Ascending aorta (tissue), 2 donors: ENCODE measurements at regions of chr15 and their contacts with region 1.

Region 1: GRCh38 chr15:88620995-88621772 is at the start of gene AEN:
- DNase-seq: peak; percentile 86 to 97
- H3K4me3 ChIP-seq: peak within 1 kb of the TSS; percentile 73 to 97
- H3K27ac ChIP-seq: peak within 1 kb of the TSS; percentile 91 to 93
- H3K4me1 ChIP-seq: peaks cover 5 to 26% of the 10 kb centered on the region in 2 donors
- H3K27me3 ChIP-seq: no peaks in the 10 kb centered on the region
- CTCF ChIP-seq: no peak
- total RNA-seq, gene AEN: 13.5 TPM

Region 2: GRCh38 chr15:88467073-88467934 is 153.9 kb before region 1 on chr15 and contains the starts of genes MRPL46 and MRPS11:
- intact Hi-C with region 1: loop called (anchors 2 kb)
- DNase-seq: peak; percentile 22 to 91
- H3K4me3 ChIP-seq: peak within 1 kb of the TSS; percentile 87 to 90
- H3K27ac ChIP-seq: peak within 1 kb of the TSS; percentile 89 to 90
- H3K4me1 ChIP-seq: peaks cover 6 to 18% of the 10 kb centered on the region in 2 donors
- H3K27me3 ChIP-seq: no peaks in the 10 kb centered on the region
- CTCF ChIP-seq: no peak
- total RNA-seq, gene MRPL46: 29.7 TPM
- total RNA-seq, gene MRPS11: 29.4 TPM

Region 3: GRCh38 chr15:88638626-88639372 is 17.6 kb after region 1 on chr15 and contains the start of gene ISG20:
- intact Hi-C with region 1: loop called (anchors 1 kb)
- DNase-seq: peak; percentile 95 to 98
- H3K4me3 ChIP-seq: peak within 1 kb of the TSS; percentile 37 to 64
- H3K27ac ChIP-seq: peak within 1 kb of the TSS; percentile 90 to 93
- H3K4me1 ChIP-seq: peaks cover 0 to 15% of the 10 kb centered on the region in 2 donors
- H3K27me3 ChIP-seq: no peaks in the 10 kb centered on the region
- CTCF ChIP-seq: peak; percentile 52 to 63 (median 55)
- total RNA-seq, gene ISG20: 5.3 TPM

Region 4: GRCh38 chr15:89197503-89197971 is 576.4 kb after region 1 on chr15:
- intact Hi-C with region 1: loop called (anchors 10 kb)
- DNase-seq: no peak
- H3K4me3 ChIP-seq: no peak overlapping the region
- H3K27ac ChIP-seq: peak overlapping the region; percentile 75 to 85
- H3K4me1 ChIP-seq: peaks cover 0 to 17% of the 10 kb centered on the region in 2 donors
- H3K27me3 ChIP-seq: no peaks in the 10 kb centered on the region
- CTCF ChIP-seq: no peak

Region 5: GRCh38 chr15:89334510-89335288 is 713.5 kb after region 1 on chr15 and contains the start of gene POLG:
- intact Hi-C with region 1: loop called (anchors 1 kb)
- DNase-seq: peak; percentile 96 to 99
- H3K4me3 ChIP-seq: peak within 1 kb of the TSS; percentile 76 to 96
- H3K27ac ChIP-seq: peak within 1 kb of the TSS; percentile 88 to 93
- H3K4me1 ChIP-seq: peaks cover 14 to 38% of the 10 kb centered on the region in 2 donors
- H3K27me3 ChIP-seq: no peaks in the 10 kb centered on the region
- CTCF ChIP-seq: no peak
- total RNA-seq, gene POLG: 69.1 TPM